ENCODE measurements at regions of chr10 and their contacts with region 1.

Region 1: DNA sequence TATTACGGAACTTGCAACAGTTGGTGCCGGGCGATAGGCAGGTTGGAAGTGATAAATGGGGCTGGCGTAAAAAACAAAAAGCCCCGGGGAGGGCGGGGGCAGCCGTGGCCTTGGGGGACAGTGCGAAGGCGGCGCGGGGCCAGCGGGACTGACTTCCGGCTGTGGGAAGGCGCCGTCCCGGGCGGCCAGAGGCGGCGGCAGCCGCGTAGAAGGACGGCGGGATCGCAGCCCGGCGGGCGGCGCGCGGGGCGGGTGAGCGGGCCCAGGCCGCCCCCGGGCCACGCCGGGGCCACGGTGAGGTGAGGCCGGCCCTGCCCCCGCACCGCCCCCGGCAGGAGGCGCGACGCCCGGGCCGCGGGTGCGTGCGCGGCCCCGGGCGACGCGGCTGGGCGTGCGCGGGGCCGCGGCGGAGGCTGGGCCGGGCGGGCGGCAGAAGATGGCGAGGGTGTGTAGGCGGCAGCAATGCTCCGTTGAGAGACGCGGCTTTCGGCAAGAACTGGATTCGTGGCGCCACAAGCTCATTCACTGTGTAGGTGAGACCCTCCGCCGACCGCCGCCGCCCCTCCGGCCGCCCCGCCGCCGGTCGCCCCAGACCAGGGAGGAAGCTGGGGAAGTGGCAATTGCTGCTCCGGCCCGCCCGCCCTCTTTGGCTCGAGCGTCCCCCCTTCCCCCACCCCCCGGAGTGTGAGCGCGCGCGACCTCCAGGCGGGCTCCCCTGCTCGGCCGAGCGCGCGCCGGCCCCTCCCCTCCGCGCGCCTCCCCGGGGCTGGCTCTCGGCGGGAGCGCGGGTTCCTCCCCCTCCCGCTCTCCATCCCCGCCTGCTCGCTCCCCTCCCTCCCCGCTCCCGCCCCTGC is at the start of gene LCOR:
- DNase-seq: peak; percentile 86
- ATAC-seq: peak; percentile 84
- H3K4me3 ChIP-seq: peak within 1 kb of the TSS; percentile 97
- H3K27ac ChIP-seq: peak within 1 kb of the TSS; percentile 100
- H3K4me1 ChIP-seq: peaks cover 6% of the 10 kb centered on the region; the same call in 1 of the 2 replicates
- H3K27me3 ChIP-seq: no peaks in the 10 kb centered on the region
- CTCF ChIP-seq: no peak
- POLR2A ChIP-seq: peak; percentile 67
- RAD21 ChIP-seq: no peak
- total RNA-seq, gene LCOR: 25.8 and 36.9 TPM in 2 replicates

Region 2: DNA sequence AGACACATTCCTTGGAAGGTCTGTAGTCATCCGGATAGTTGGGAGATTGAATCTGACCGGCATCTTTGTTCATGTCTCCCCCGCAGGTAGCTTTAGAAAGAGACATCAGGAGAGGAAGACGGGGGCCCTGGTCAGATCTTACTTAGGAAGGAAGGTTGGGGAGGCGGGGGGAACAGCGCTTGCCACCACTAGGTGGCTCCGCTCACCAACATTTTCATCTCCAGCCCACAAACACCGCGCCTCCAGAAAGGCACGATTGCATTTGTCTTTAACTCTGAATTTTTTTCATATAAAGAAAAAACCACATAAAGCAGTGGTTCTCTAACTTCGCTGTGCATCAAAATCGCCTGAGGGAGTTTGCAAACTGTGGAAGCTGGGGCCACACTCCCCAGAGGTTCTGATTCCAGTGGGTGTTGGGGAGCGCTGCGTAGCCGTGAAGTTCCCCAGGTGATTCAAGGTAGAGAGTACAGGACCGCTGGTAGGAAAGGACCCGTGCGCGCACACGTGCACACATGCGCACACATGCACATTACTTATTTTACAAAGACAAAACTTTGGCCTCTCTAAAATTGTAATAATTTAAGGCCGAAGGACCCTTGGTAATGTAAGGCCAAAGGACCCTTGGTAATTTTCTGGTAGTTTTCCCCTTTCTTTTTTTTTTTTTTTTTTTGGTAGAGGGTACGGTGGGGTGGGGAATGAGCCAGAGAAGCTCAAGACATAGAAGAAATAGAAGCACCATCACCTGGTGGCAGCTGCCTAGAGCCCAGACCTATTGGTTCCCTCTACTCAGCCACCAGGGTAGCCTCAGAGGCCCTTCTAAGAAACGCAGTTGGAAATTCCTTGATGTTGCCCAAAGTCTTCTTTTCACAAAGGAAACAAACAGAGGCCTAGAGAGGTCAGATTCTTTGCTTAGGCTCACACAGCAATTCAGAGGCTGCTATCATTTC is 435.9 kb before region 1 on chr10:
- CTCF ChIA-PET with region 1: no interaction called
- POLR2A ChIA-PET with region 1: no interaction called
- dilution Hi-C with region 1: no loop called
- in situ Hi-C with region 1: no loop called
- intact Hi-C with region 1: loop called (anchors 1 kb)
- DNase-seq: peak; percentile 67
- ATAC-seq: peak; percentile 95
- H3K4me3 ChIP-seq: no peak overlapping the region
- H3K27ac ChIP-seq: no peak overlapping the region
- H3K4me1 ChIP-seq: no peaks in the 10 kb centered on the region
- H3K27me3 ChIP-seq: peaks cover 39% of the 10 kb centered on the region
- CTCF ChIP-seq: peak; percentile 84
- POLR2A ChIP-seq: no peak
- RAD21 ChIP-seq: peak; percentile 80

Region 3: GRCh38 chr10:96586419-96587263 is 245.5 kb before region 1 on chr10 and contains the start of gene TM9SF3:
- CTCF ChIA-PET with region 1: no interaction called
- POLR2A ChIA-PET with region 1: no interaction called
- dilution Hi-C with region 1: no loop called
- in situ Hi-C with region 1: no loop called
- intact Hi-C with region 1: loop called (anchors 2 kb)
- DNase-seq: peak; percentile 83
- ATAC-seq: peak; percentile 87
- H3K4me3 ChIP-seq: peak within 1 kb of the TSS; percentile 78
- H3K27ac ChIP-seq: peak within 1 kb of the TSS; percentile 95
- H3K4me1 ChIP-seq: peaks cover 11% of the 10 kb centered on the region
- H3K27me3 ChIP-seq: no peaks in the 10 kb centered on the region
- CTCF ChIP-seq: no peak
- POLR2A ChIP-seq: peak; percentile 91
- RAD21 ChIP-seq: no peak
- total RNA-seq, gene TM9SF3: 61.8 and 190 TPM in 2 replicates

Region 4: GRCh38 chr10:96765406-96766240 is 66.5 kb before region 1 on chr10:
- CTCF ChIA-PET with region 1: no interaction called
- POLR2A ChIA-PET with region 1: no interaction called
- dilution Hi-C with region 1: no loop called
- in situ Hi-C with region 1: no loop called
- intact Hi-C with region 1: loop called (anchors 1 kb)
- DNase-seq: peak; percentile 44
- ATAC-seq: peak; percentile 93
- H3K4me3 ChIP-seq: no peak overlapping the region
- H3K27ac ChIP-seq: no peak overlapping the region
- H3K4me1 ChIP-seq: no peaks in the 10 kb centered on the region
- H3K27me3 ChIP-seq: peaks cover 7% of the 10 kb centered on the region
- CTCF ChIP-seq: peak; percentile 81
- POLR2A ChIP-seq: no peak
- RAD21 ChIP-seq: peak; percentile 83

Region 5: GRCh38 chr10:96850825-96851224 is 18.7 kb after region 1 on chr10:
- CTCF ChIA-PET with region 1: no interaction called
- POLR2A ChIA-PET with region 1: no interaction called
- dilution Hi-C with region 1: no loop called
- in situ Hi-C with region 1: no loop called
- intact Hi-C with region 1: no loop called
- DNase-seq: peak; percentile 98
- ATAC-seq: peak; percentile 92
- H3K4me3 ChIP-seq: no peak overlapping the region
- H3K27ac ChIP-seq: no peak overlapping the region
- H3K4me1 ChIP-seq: peaks cover 10% of the 10 kb centered on the region
- H3K27me3 ChIP-seq: no peaks in the 10 kb centered on the region
- CTCF ChIP-seq: no peak
- POLR2A ChIP-seq: no peak
- RAD21 ChIP-seq: no peak

Region 6: DNA sequence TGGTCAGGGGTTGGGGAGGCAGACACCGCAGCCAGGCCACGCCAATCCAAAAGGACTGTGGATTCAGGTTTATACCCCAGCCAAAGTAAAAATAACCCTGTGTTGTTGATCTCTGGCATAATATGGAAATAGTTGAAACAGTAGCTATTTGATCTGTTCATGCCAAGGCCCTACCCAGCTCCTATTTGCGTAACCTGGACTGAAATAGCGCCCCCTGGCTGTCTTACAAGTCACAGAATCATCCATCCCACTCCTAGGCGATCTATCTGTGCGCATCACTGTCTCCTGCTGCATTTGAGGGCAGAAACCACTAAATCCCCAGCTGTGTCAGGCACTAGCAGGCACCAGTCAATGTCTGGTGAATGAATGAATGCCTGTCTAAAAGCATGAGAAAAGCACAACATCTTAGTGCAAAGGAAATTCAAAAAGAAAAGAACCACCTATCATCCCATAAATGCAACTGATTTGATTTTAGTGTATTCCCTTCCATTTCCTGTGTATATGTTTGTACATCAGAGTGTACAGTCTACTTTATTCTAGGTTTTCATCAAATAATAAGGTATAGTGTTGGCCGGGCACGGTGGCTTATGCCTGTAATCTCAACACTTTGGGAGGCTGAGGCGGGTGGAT is 193.6 kb after region 1 on chr10:
- CTCF ChIA-PET with region 1: no interaction called
- POLR2A ChIA-PET with region 1: no interaction called
- dilution Hi-C with region 1: no loop called
- in situ Hi-C with region 1: no loop called
- intact Hi-C with region 1: loop called (anchors 2 kb)
- DNase-seq: peak; percentile 40
- ATAC-seq: no peak
- H3K4me3 ChIP-seq: no peak overlapping the region
- H3K27ac ChIP-seq: no peak overlapping the region
- H3K4me1 ChIP-seq: peaks cover 7% of the 10 kb centered on the region
- H3K27me3 ChIP-seq: peaks cover 3% of the 10 kb centered on the region; the same call in 1 of the 2 replicates
- CTCF ChIP-seq: peak; percentile 43
- POLR2A ChIP-seq: no peak
- RAD21 ChIP-seq: no peak; the same call in 1 of the 2 replicates

Region 7: DNA sequence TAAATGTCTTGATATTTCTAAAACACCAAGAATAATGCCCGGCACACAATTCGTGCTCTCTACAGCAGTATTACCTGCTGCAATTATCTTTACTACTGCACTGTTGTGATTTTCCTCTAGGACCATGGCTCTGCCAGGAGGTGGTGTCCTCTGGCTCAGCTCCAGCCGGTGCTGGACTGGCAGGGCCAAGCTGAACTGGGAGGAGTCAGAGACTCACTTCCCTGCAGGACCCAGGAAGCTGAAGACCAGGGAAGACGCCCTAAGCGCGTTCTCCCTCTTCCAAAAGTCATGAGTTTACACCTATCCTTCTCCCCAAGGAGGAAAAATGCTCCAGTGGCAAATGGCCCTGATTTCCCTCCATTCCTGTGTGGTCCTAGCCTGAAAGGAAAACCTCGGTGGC is 338.2 kb after region 1 on chr10:
- CTCF ChIA-PET with region 1: no interaction called
- POLR2A ChIA-PET with region 1: no interaction called
- dilution Hi-C with region 1: no loop called
- in situ Hi-C with region 1: no loop called
- intact Hi-C with region 1: no loop called
- DNase-seq: no peak
- ATAC-seq: no peak
- H3K4me3 ChIP-seq: no peak overlapping the region
- H3K27ac ChIP-seq: no peak overlapping the region
- H3K4me1 ChIP-seq: no peaks in the 10 kb centered on the region
- H3K27me3 ChIP-seq: peaks cover 33% of the 10 kb centered on the region
- CTCF ChIP-seq: no peak
- POLR2A ChIP-seq: no peak
- RAD21 ChIP-seq: no peak

Region 8: GRCh38 chr10:97210543-97210961 is 378.5 kb after region 1 on chr10:
- CTCF ChIA-PET with region 1: no interaction called
- POLR2A ChIA-PET with region 1: no interaction called
- dilution Hi-C with region 1: no loop called
- in situ Hi-C with region 1: no loop called
- intact Hi-C with region 1: loop called (anchors 5 kb)
- DNase-seq: peak; percentile 66
- ATAC-seq: peak; percentile 97
- H3K4me3 ChIP-seq: no peak overlapping the region
- H3K27ac ChIP-seq: no peak overlapping the region
- H3K4me1 ChIP-seq: no peaks in the 10 kb centered on the region
- H3K27me3 ChIP-seq: peaks cover 25% of the 10 kb centered on the region
- CTCF ChIP-seq: peak; percentile 92
- POLR2A ChIP-seq: no peak
- RAD21 ChIP-seq: peak; percentile 83